Prostate gland (tissue), 2 donors: ENCODE measurements at regions of chr19 and their contacts with region 1.

Region 1: GRCh38 chr19:7098701-7099596 is 29.4 kb downstream of the ZNF557 start:
- DNase-seq: peak; percentile 87
- H3K4me3 ChIP-seq: peak overlapping the region; percentile 45 to 54
- H3K27ac ChIP-seq: peak overlapping the region; percentile 85 to 91
- H3K4me1 ChIP-seq: no peaks in the 10 kb centered on the region
- H3K27me3 ChIP-seq: no peaks in the 10 kb centered on the region
- CTCF ChIP-seq: no peak
- POLR2A ChIP-seq: peak; percentile 31

Region 2: DNA sequence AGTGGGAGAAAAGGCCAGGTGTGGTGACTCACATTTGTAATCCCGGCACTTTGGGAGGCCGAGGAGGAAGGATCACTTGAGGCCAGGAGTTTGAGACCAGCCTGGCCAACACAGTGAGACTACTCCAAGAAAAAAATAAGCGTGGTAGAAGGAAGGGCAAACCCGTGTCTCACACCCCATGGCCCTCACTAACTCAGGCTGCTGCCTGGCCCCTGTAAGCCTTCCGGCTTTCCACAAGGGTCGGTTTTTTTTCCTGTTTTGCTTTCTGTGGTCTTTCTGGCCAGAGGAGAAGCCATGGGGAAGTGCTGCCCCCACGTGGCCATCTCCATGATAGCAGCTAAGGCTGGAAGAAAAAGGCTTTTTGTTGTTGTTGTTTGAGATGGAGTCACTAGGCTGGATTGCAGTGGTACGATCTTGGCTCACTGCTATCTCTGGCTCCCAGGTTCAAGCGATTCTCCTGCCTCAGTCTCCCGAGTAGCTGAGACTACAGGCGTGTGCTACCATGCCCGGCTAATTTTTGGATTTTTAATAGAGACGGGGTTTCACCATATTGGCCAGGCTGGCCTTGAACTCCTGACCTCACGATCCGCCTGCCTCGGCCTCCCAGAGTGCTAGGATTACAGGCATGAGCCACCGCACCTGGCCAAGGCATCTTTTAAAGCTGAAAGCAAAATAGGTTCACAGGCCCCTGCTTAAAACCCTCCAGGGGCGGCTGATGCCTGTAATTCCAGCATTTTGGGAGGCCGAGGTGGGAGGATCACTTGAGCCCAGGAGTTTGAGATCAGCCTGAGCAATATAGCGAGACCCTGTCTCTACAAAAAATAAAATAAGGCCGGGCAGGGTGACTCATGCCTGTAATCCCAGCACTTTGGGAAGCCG is 242.2 kb after region 1 on chr19:
- intact Hi-C with region 1: loop called (anchors 2 kb)
- DNase-seq: peak; percentile 53
- H3K4me3 ChIP-seq: no peak overlapping the region
- H3K27ac ChIP-seq: no peak overlapping the region
- H3K4me1 ChIP-seq: no peaks in the 10 kb centered on the region
- H3K27me3 ChIP-seq: no peaks in the 10 kb centered on the region
- CTCF ChIP-seq: peak; percentile 88 to 95 (median 91)
- POLR2A ChIP-seq: no peak

Region 3: DNA sequence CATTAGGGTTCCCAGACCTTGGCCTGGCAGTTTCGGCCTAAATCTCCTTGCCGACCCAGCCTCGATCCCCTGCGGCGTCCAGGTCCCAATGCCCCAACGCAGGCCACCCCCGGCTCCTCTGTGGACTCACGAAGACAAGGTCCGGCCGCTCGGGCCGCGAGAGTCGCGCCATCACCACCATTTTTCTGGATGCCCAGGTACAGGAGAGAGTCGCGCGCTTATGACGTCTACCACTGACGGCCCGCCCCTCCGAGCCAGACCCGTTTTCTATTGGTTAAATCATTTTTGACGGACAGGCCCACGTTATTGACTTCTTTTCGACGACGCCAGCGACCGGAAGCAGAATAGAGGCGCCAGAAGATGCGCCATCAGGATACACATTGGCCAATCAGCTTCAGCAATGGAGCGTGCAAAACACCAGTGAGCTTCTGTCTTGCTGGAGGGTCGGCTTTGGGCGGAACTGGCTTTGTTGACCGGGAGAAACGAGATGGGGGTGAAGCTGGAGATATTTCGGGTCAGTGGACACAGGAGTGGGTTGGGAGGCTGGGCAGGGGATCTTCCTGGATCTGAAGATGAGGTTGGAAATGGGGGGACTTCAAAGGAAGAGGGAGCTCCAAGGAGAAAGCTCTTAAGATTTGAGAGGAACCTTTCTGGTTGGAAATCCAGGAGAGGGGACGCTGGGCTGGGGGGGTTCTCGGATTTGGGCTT is 530.6 kb after region 1 on chr19 and contains the starts of genes PET100 and XAB2:
- intact Hi-C with region 1: loop called (anchors 10 kb)
- DNase-seq: peak; percentile 99
- H3K4me3 ChIP-seq: peak within 1 kb of the TSS; percentile 84 to 92
- H3K27ac ChIP-seq: peak within 1 kb of the TSS; percentile 78 to 84
- H3K4me1 ChIP-seq: peaks cover 13% of the 10 kb centered on the region
- H3K27me3 ChIP-seq: no peaks in the 10 kb centered on the region
- CTCF ChIP-seq: peak in 2 of 4 experiments; percentile 6 to 13
- POLR2A ChIP-seq: peak; percentile 50
- total RNA-seq, gene PET100: 7.7 to 60.4 TPM
- total RNA-seq, gene XAB2: 53.6 to 115 TPM